Caco-2 (cell line): ENCODE measurements at regions of chr10 and their contacts with region 1.

Region 1: DNA sequence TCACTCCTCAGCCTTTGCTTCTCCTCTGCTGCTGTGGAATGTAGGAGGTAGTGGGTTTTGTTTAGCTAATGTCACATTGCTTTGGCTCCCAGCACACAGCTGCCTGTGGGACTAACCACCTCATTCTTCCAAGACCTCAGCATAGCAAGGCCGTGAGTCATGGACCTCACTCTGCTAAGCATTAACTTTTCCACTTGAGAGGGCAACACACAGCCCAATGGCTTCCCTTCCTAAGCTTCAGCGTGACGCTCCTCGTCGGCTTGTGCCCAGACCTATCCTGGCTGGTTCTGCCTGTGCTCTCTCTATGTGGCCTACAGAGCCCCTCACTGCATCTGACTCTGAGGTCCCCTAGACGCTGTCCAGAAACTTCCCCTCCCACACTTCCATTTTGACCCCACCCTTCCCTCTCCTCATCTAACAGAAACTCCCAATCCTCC is 23.3 kb downstream of the MYOF start:
- DNase-seq: peak; percentile 90 to 96
- H3K4me3 ChIP-seq: no peak overlapping the region
- H3K4me3 Mint-ChIP-seq: peak overlapping the region; percentile 69
- H3K27ac Mint-ChIP-seq: peak overlapping the region; percentile 98
- H3K4me1 ChIP-seq: peaks cover 65% of the 10 kb centered on the region
- H3K4me1 Mint-ChIP-seq: peaks cover 51% of the 10 kb centered on the region
- H3K27me3 ChIP-seq: no peaks in the 10 kb centered on the region
- H3K27me3 Mint-ChIP-seq: no peaks in the 10 kb centered on the region
- CTCF ChIP-seq: no peak

Region 2: DNA sequence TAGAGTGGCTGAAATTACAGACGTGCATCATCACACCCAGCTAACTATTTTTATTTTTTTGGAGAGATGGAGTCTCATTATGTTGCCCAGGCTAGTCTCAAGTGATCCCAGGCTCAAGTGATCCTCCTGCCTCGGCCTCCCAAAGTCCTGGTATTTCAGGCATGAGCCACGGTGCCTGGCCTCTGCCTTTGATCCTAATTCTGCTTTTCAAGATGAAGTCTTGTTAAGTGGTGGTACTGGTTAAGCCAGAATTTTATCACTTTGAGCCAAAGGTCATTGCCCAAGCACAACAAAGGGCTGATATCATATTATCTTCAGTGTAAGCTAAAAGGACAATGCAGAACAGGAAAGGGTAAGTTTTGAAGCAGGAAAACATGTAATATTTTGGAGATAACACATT is 40.9 kb before region 1 on chr10:
- CTCF ChIA-PET with region 1: no interaction called
- POLR2A ChIA-PET with region 1: no interaction called
- intact Hi-C with region 1: loop called (anchors 2 kb)
- DNase-seq: peak; percentile 84 to 85
- H3K4me3 ChIP-seq: no peak overlapping the region
- H3K4me3 Mint-ChIP-seq: peak overlapping the region; percentile 62
- H3K27ac Mint-ChIP-seq: peak overlapping the region; percentile 99
- H3K4me1 ChIP-seq: peaks cover 65% of the 10 kb centered on the region
- H3K4me1 Mint-ChIP-seq: peaks cover 55% of the 10 kb centered on the region
- H3K27me3 ChIP-seq: no peaks in the 10 kb centered on the region
- H3K27me3 Mint-ChIP-seq: no peaks in the 10 kb centered on the region
- CTCF ChIP-seq: no peak

Region 3: GRCh38 chr10:93437088-93437945 is 21.5 kb before region 1 on chr10:
- CTCF ChIA-PET with region 1: interaction called, 7 read pairs
- POLR2A ChIA-PET with region 1: interaction called, 12 read pairs
- intact Hi-C with region 1: loop called (anchors 2 kb)
- DNase-seq: peak; percentile 84 to 88
- H3K4me3 ChIP-seq: no peak overlapping the region
- H3K4me3 Mint-ChIP-seq: peak overlapping the region; percentile 60
- H3K27ac Mint-ChIP-seq: peak overlapping the region; percentile 96
- H3K4me1 ChIP-seq: peaks cover 73% of the 10 kb centered on the region
- H3K4me1 Mint-ChIP-seq: peaks cover 75% of the 10 kb centered on the region
- H3K27me3 ChIP-seq: no peaks in the 10 kb centered on the region
- H3K27me3 Mint-ChIP-seq: no peaks in the 10 kb centered on the region
- CTCF ChIP-seq: no peak

Region 4: GRCh38 chr10:93445097-93445960 is 13.5 kb before region 1 on chr10:
- CTCF ChIA-PET with region 1: interaction called, 6 read pairs
- POLR2A ChIA-PET with region 1: interaction called, 48 read pairs
- intact Hi-C with region 1: loop called (anchors 1 kb)
- DNase-seq: peak; percentile 97 to 98
- H3K4me3 ChIP-seq: no peak overlapping the region
- H3K4me3 Mint-ChIP-seq: peak overlapping the region; percentile 60
- H3K27ac Mint-ChIP-seq: peak overlapping the region; percentile 96
- H3K4me1 ChIP-seq: peaks cover 60% of the 10 kb centered on the region
- H3K4me1 Mint-ChIP-seq: peaks cover 68% of the 10 kb centered on the region
- H3K27me3 ChIP-seq: no peaks in the 10 kb centered on the region
- H3K27me3 Mint-ChIP-seq: no peaks in the 10 kb centered on the region
- CTCF ChIP-seq: no peak

Region 5: DNA sequence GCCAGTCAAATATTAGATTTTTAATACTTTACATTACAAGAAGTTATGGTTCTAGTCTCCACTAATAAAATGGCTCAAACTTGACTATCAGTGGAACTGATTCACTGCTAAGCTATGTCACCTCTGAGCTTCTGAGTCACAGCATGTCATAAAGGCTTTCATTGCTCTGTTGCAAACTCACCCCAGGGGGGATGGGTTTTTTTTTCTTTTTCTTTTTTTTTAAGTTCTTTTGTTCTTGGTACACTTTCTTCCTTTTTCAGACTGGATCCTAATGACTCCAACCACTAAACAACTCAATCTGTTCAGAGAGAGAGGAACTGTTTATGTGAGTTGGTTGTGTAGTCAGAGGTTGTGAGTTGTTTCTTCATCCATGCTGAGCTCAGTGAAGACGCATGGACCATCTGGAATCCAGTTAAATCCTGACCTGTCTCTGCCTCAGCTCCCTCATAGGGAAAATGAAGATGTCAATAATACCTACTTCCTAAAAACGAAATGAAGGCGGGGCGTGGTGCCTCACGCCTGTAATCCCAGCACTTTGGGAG is 12.3 kb after region 1 on chr10:
- CTCF ChIA-PET with region 1: interaction called, 3 read pairs
- POLR2A ChIA-PET with region 1: interaction called, 28 read pairs
- intact Hi-C with region 1: no loop called
- DNase-seq: peak; percentile 61 to 72
- H3K4me3 ChIP-seq: no peak overlapping the region
- H3K4me3 Mint-ChIP-seq: peak overlapping the region; percentile 37
- H3K27ac Mint-ChIP-seq: peak overlapping the region; percentile 95
- H3K4me1 ChIP-seq: peaks cover 88% of the 10 kb centered on the region
- H3K4me1 Mint-ChIP-seq: peaks cover 51% of the 10 kb centered on the region
- H3K27me3 ChIP-seq: no peaks in the 10 kb centered on the region
- H3K27me3 Mint-ChIP-seq: no peaks in the 10 kb centered on the region
- CTCF ChIP-seq: no peak